A549 (cell line): ENCODE measurements at regions of chr12 and their contacts with region 1.

Region 1: DNA sequence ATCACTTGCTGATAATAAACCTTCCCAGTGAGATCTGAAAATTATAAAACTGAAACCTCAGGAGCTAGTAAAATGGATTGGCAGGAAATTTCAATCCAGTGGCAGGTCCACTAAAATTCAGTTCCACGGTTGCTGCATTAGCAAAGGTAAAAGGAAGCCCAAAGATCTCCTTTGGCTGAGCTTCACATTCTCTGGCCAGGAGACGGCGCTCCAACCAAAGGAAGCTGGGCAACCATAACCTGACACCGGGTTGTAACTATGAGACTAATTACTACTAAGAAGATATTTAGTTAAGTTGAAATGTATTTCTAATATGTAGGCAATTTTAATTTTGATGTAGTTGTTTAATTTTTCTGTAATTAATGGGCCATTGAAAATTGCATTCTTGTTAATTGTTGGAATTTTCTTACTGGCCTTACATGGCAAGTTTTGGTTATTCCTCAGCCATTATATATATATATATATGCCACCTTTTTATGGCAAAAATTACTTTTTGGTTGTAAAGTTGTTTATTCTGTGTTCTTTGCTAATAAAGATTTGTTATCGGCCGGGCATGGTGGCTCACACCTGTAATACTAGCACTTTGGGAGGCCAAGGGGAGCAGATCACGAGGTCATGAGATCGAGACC is 17.0 kb downstream of the OR8S1 start:
- DNase-seq: peak; percentile 21 to 59
- ATAC-seq: peak; percentile 73 to 90; a peak in 5 of 6 replicates
- H3K4me3 ChIP-seq: no peak overlapping the region
- H3K27ac ChIP-seq: no peak overlapping the region
- H3K4me1 ChIP-seq: no peaks in the 10 kb centered on the region
- CTCF ChIP-seq: peak; percentile 73
- EP300 ChIP-seq: no peak
- POLR2A ChIP-seq: no peak
- RAD21 ChIP-seq: peak; percentile 73 to 92

Region 2: DNA sequence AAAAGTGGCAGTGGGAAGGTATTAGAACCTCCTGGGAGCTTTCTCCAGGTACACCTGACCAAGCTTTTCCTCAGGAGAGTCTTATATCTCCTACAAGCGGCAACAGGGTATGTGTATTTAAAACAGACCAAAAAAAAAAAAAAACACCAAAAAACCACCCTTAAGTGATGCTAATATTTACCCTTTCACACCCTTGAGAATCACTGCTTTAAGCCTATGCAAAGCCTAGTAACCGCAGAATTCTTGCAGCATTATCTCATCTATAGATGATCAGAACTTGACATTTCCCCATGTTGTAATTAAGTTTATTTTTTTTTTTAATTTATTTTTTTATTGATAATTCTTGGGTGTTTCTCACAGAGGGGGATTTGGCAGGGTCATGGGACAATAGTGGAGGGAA is 211.0 kb before region 1 on chr12:
- CTCF ChIA-PET with region 1: no interaction called
- POLR2A ChIA-PET with region 1: no interaction called
- DNase-seq: no peak
- ATAC-seq: no peak
- H3K4me3 ChIP-seq: no peak overlapping the region
- H3K27ac ChIP-seq: no peak overlapping the region
- H3K4me1 ChIP-seq: no peaks in the 10 kb centered on the region
- CTCF ChIP-seq: no peak
- EP300 ChIP-seq: no peak
- POLR2A ChIP-seq: no peak
- RAD21 ChIP-seq: no peak

Region 3: GRCh38 chr12:48527891-48528675 is 14.3 kb before region 1 on chr12:
- CTCF ChIA-PET with region 1: interaction called, 12 read pairs
- POLR2A ChIA-PET with region 1: no interaction called
- DNase-seq: no peak
- ATAC-seq: no peak
- H3K4me3 ChIP-seq: no peak overlapping the region
- H3K27ac ChIP-seq: no peak overlapping the region
- H3K4me1 ChIP-seq: no peaks in the 10 kb centered on the region
- CTCF ChIP-seq: no peak
- EP300 ChIP-seq: no peak
- POLR2A ChIP-seq: no peak
- RAD21 ChIP-seq: no peak

Region 4: GRCh38 chr12:48903982-48904411 is 361.6 kb after region 1 on chr12:
- CTCF ChIA-PET with region 1: no interaction called
- POLR2A ChIA-PET with region 1: no interaction called
- DNase-seq: peak; percentile 92 to 93
- ATAC-seq: peak; percentile 96 to 98
- H3K4me3 ChIP-seq: peak overlapping the region; percentile 52
- H3K27ac ChIP-seq: peak overlapping the region in 1 of 2 experiments; percentile 72; a peak in 3 of 6 replicates
- H3K4me1 ChIP-seq: peaks cover 14% of the 10 kb centered on the region; the same call in 2 of the 3 replicates
- CTCF ChIP-seq: peak; percentile 90
- EP300 ChIP-seq: no peak
- POLR2A ChIP-seq: no peak
- RAD21 ChIP-seq: peak in 1 of 2 experiments; percentile 10; a peak in 1 of 5 replicates